ENCODE measurements at regions of chr10 and their contacts with region 1.

Region 1: DNA sequence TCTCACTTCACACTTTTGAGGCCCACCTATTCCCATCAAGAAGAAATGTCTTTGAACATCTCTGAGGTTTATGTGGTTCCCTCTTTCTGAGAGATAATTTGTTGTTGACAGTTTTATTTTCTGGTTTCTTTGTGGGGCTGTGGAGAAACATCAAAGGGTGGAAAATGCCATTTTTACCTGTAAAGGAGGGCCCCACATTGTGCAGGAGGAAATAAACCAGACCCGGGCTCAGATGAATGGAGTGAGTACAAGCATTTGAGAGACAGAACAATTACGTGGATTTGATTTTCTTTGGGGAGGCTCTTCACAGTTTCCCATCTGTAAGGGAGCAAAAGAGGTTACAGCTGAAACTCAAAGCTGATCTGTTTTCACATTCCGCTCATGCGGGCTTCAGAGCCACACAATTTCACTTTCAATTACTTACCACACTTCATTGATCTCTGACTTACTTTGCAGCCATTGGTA is 29.8 kb downstream of the ITPRIP start:
- DNase-seq: peak; percentile 58
- CTCF ChIP-seq: no peak

Region 2: DNA sequence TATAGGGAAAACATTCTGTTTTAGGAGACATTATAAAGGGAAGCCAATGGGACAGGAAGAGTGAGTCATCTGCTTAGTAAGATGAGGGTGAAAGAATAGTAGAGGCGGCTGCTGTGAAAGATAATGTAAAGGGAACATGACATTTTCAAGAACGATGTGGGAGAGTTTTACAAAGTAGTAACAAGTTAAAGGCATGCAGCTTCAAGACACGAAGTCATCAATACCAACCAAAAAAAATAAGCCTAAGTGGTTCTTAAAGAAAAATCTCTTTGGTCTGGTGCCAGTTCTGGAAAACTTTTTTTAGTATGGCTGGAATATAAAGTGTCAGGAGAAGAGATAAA is 47.7 kb before region 1 on chr10:
- CTCF ChIA-PET with region 1: no interaction called
- POLR2A ChIA-PET with region 1: no interaction called
- DNase-seq: no peak
- CTCF ChIP-seq: no peak

Region 3: GRCh38 chr10:104274762-104275721 is 33.4 kb before region 1 on chr10:
- CTCF ChIA-PET with region 1: interaction called, 28 read pairs
- POLR2A ChIA-PET with region 1: interaction called, 3 read pairs
- DNase-seq: peak; percentile 73
- CTCF ChIP-seq: peak; percentile 76

Region 4: GRCh38 chr10:104322416-104322782 is 13.9 kb after region 1 on chr10:
- CTCF ChIA-PET with region 1: interaction called, 50 read pairs
- POLR2A ChIA-PET with region 1: no interaction called
- DNase-seq: no peak
- CTCF ChIP-seq: no peak

Region 5: GRCh38 chr10:104328896-104329710 is 20.6 kb after region 1 on chr10:
- CTCF ChIA-PET with region 1: interaction called, 61 read pairs
- POLR2A ChIA-PET with region 1: no interaction called
- DNase-seq: peak; percentile 59
- CTCF ChIP-seq: no peak

Region 6: DNA sequence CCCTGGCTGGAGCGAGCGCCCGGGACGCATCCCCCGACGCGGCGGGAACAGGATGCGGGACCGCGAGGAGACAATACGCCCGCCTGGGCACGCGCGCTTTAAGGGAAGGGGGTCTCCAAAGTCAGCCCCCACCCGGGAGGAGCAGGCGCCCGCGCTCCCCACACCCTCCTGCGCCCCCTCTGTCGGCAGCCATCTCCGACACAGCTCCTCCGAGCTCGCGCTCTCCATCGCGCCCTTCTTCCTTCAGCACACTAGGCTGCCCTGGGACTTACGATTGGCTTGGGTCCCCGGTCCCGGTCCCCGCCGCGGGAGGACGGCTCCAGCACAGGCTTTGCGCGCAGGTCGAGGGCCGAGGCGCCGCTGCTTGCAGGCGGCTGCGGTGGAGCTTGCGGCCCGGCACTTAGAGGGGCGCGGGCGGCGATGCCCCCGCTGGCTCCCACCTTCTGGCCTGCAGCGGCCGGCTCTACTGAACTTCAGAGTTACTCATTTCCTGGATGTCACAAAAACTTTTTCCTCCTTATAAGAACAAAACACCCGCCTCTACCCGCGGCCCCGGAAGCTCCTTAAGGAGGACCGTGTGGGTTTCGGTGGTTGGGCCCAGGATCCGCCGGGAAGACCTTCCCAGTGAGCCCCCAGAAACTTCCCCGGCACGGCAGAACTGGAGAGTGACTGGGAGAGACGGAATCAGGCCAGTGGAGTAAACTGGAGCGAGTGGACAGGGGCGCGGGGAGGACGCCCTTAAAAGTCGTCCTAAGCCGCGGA is 29.7 kb after region 1 on chr10 and contains the start of gene ITPRIP:
- CTCF ChIA-PET with region 1: interaction called, 61 read pairs
- POLR2A ChIA-PET with region 1: no interaction called
- DNase-seq: peak; percentile 79
- CTCF ChIP-seq: no peak

Measured in GM10248 (cell line).